ENCODE measurements at regions of chr5 and their contacts with region 1.

Region 1: DNA sequence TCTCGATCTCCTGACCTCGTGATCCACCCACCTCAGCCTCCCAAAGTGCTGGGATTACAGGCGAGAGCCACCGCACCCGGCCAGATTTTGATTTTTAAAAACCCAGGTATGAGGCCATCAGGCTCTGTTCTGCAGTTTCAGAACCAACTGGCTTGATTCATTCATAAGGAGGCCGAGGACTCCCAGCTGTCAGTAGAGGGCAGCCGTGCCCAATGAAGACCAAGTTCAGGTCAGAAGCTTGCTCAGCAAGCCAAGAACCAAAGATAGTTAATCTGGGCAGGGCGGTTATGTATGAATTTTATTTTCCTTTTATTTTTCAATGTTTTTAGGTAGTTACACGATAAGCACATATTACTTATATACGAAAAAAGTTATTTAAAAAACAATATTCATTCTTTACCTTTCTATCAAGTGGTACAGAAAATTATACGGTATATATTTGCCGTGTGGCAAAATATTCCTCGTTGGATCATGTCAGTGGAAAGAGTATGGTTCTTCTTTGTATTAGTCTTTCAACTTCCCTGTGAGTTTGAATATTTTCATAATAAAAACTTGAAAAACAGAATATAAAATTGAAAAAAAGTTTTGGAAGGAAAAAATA is 18.0 kb downstream of the MGAT1 start:
- DNase-seq: peak; percentile 83 to 89 (median 84)
- ATAC-seq: peak; percentile 63 to 78 (median 74)
- H3K4me3 ChIP-seq: no peak overlapping the region
- H3K27ac ChIP-seq: peak overlapping the region in 7 of 12 donors; percentile 41 to 81 (median 73)
- H3K4me1 ChIP-seq: peaks cover 4 to 50% (median 37%) of the 10 kb centered on the region in 12 donors
- H3K27me3 ChIP-seq: no peaks in the 10 kb centered on the region
- CTCF ChIP-seq: peak; percentile 59 to 90 (median 78)
- POLR2A ChIP-seq: no peak

Region 2: DNA sequence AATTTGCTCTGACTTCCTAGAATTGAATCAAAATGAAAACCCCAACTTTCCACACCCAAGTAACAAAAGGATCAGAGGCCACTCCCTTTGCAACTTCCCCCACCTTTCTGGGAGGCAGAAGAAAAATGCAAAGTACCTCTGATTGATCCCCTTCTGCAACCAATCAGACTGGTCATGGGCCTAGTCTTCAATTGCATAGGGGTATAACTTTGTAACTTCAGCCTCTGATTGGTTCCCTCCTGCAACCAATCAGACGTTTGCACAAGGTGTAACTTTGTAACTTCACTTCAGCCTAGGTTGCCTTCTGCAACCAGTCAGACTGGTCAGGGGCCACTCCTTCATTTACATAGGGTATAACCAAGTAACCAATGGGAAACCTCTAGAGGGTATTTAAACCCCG is 328.7 kb before region 1 on chr5:
- intact Hi-C with region 1: no loop called
- DNase-seq: no peak
- ATAC-seq: no peak
- H3K4me3 ChIP-seq: no peak overlapping the region
- H3K27ac ChIP-seq: no peak overlapping the region
- H3K4me1 ChIP-seq: no peaks in the 10 kb centered on the region
- H3K27me3 ChIP-seq: peaks cover 0 to 5% (median 0%) of the 10 kb centered on the region in 9 donors
- CTCF ChIP-seq: no peak
- POLR2A ChIP-seq: no peak

Region 3: DNA sequence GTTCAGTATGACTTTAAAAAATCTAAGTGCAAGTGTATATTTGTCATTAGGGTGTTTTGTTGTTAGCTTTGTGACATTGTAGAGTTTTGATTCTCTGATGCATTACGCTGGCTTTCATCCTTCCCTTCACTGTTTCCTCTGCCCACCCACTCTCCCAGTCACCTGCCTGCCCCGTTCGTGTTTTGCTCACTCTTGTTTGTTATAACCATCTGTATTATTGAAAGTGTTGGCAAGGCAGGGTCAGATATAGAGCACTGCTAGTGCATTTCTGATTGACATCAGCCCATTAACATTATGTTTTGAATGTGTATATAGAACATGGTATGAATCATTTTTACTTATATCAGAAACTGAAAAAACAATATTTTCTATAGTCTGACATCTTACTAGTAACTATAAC is 220.6 kb before region 1 on chr5:
- intact Hi-C with region 1: no loop called
- DNase-seq: no peak
- ATAC-seq: no peak
- H3K4me3 ChIP-seq: no peak overlapping the region
- H3K27ac ChIP-seq: no peak overlapping the region
- H3K4me1 ChIP-seq: no peaks in the 10 kb centered on the region
- H3K27me3 ChIP-seq: no peaks in the 10 kb centered on the region
- CTCF ChIP-seq: no peak
- POLR2A ChIP-seq: no peak

Region 4: GRCh38 chr5:180868960-180869359 is 84.4 kb after region 1 on chr5:
- intact Hi-C with region 1: loop called in 7 of 10 experiments (anchors 2 to 5 kb)
- DNase-seq: peak; percentile 73 to 84 (median 76)
- ATAC-seq: peak in 3 of 4 donors; percentile 78 to 85 (median 80)
- H3K4me3 ChIP-seq: no peak overlapping the region
- H3K27ac ChIP-seq: no peak overlapping the region
- H3K4me1 ChIP-seq: peaks cover 0 to 15% (median 0%) of the 10 kb centered on the region in 12 donors
- H3K27me3 ChIP-seq: peaks cover 0 to 7% (median 0%) of the 10 kb centered on the region in 9 donors
- CTCF ChIP-seq: peak; percentile 55 to 80 (median 70)
- POLR2A ChIP-seq: no peak

Region 5: DNA sequence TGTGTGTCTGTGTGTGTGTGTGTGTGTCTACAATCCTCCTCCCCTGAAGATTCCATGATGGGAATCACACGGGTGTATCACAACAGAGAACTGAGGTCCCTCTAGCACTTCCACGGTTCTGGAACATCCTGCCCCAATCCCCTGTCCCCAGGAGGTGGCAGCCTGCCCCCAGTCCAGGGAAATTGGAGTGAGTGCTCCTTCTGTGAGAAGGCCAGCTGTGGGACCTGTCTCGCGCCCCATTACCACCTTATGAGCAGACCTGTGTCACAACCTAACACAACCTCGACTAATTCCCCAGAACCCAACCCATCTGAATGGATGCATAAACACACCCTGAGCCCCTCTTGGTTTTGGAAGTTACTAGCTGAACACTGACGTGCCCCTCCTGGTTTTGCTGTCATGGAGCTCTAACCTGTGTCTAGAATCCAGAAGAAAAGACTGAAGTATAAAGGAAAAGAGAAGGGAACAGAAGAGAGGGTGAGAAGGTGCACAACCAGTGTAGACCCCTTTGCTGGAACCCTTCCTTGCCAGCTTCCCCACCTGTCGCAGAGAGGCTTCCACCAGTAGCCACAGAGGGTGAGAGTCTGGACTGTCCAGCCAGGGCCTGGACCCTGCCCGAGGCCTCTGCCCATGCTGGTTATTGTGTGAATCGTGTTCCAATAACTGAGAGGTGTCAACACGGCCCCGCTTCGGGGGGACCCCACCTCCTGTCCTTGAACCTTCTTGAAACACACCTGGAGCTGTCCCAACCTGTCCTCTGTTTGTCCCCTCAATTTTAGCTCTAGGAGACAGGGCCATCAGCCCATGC is 258.9 kb after region 1 on chr5:
- intact Hi-C with region 1: loop called in 4 of 10 experiments (anchors 10 kb)
- DNase-seq: peak in 1 of 5 donors; percentile 42
- ATAC-seq: peak in 2 of 4 donors; percentile 30 to 48
- H3K4me3 ChIP-seq: peak overlapping the region in 11 of 12 donors; percentile 11 to 65 (median 52)
- H3K27ac ChIP-seq: peak overlapping the region; percentile 60 to 92 (median 83)
- H3K4me1 ChIP-seq: peaks cover 0 to 20% (median 0%) of the 10 kb centered on the region in 12 donors
- H3K27me3 ChIP-seq: peaks cover 0 to 33% (median 9%) of the 10 kb centered on the region in 9 donors
- CTCF ChIP-seq: peak in 8 of 12 donors; percentile 6 to 48 (median 25)
- POLR2A ChIP-seq: no peak

Region 6: GRCh38 chr5:181159286-181159829 is 374.8 kb after region 1 on chr5:
- intact Hi-C with region 1: loop called (anchors 2 to 10 kb)
- DNase-seq: peak; percentile 79 to 91 (median 81)
- ATAC-seq: peak; percentile 72 to 94 (median 92)
- H3K4me3 ChIP-seq: no peak overlapping the region
- H3K27ac ChIP-seq: peak overlapping the region in 1 of 12 donors; percentile 81
- H3K4me1 ChIP-seq: peaks cover 0 to 14% (median 2%) of the 10 kb centered on the region in 12 donors
- H3K27me3 ChIP-seq: peaks cover 0 to 14% (median 9%) of the 10 kb centered on the region in 9 donors
- CTCF ChIP-seq: peak; percentile 83 to 91 (median 85)
- POLR2A ChIP-seq: no peak